GM13976 (cell line): ENCODE measurements at regions of chr18 and their contacts with region 1.

Region 1: DNA sequence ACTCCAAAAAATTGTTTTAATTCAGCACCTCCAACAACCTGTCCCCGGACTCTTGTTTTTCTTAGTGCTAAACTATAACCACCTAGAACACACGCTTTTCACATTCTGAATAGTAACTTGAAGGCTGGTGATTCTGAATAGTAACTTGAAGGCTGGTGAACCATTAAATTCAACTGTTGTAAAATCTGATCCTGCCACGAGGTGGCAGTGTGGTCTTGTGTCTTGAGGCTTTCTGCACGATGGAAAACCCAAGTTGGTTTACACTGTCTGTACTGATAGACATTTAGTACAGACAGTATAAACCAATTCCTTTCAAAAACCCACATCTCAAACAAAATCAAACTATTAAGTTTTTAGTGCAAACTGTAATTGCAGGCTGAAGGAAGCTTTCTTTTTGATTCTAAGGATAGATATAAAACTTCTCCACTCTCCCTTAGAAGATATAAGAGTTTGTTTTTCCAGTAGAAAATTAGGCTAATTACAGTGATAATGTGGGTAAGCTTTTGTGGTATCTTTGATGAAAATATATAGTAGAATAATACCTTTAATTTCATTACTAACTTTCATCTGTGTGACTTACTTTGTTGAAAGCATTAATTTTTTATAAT is 57.6 kb downstream of the VAPA start:
- DNase-seq: peak; percentile 78
- CTCF ChIP-seq: peak; percentile 55

Region 2: DNA sequence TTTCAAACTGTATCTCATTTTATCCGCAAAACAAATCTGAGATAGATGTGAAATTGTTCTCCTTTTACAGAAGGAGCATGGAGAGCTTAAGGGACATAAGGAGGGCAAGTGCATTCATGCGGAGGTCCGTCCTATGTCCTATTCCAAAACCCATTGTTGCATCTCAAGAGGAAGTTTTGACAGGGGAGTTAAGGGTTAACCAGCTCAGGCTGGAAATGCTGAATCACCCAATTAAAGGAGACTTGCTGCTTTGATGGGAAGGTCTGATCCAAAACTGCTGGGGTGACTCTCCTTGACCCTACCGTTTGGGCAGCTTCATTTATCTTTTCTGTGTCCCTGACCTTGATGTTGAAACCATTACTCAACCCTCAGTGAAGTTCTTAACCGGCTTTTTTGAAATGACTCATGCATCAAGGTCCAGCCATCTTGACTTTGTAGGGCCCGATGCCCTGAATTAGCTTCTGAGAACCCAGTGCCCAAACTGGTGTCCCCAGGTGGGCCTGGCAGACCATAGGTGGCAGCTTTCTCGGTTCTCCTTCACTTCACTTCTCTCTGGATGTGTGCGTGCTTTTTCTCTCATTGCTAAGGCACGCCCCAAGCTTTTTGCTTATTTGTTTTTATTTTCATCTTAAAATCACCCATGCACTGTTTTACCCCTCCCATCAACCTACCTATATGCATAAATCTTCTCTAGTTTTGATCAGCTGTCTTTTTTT is 101.5 kb before region 1 on chr18:
- in situ Hi-C with region 1: loop called (anchors 25 kb)
- DNase-seq: peak; percentile 43
- CTCF ChIP-seq: no peak

Region 3: GRCh38 chr18:10213526-10213925 is 242.1 kb after region 1 on chr18:
- in situ Hi-C with region 1: no loop called
- DNase-seq: no peak
- CTCF ChIP-seq: no peak

Region 4: DNA sequence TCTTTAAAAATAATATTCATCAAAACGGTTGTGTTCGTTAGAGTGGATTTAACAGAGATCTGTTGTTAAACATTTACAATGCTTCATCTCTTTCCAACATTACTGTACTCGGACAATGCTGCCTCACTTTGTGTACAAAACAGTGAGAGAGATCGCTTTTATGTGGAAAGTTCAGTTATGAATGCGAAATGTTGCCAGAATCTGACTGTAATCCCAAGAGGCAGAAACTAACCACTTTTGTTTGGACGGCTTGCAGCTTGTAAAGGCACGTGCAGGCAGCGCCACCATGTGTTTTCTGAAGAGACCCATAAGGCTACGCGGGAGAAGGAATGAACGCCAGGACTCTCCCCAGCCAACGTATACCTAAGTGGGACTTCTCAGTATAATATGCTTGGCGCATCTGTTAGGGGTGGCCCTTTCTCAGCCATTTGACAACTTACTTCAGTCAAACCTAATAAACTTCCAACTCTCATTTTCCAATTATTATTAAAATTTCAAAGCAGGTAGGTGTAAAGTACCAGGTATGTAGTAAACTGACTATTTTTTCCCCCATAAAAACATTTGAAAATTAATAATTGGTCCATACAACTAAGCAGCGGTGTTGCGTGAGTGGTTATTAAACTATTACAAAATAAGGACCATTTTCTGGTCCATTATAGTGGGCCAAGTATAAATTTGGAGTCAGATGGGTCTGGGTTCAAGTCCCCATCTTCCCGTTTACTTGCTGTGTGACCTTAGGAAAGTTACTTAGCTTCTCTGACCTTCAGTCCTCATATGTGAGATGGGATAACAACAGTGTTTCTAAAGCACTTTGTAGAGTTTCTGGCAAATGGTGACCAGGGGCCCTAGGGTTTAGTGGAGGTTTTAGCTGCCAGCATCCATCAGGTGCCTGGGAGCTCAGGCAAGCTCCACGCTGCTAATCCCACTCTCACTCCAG is 548.9 kb after region 1 on chr18:
- in situ Hi-C with region 1: loop called (anchors 5 kb)
- DNase-seq: peak; percentile 70
- CTCF ChIP-seq: peak; percentile 59